ENCODE measurements at regions of chr5 and their contacts with region 1.

Region 1: DNA sequence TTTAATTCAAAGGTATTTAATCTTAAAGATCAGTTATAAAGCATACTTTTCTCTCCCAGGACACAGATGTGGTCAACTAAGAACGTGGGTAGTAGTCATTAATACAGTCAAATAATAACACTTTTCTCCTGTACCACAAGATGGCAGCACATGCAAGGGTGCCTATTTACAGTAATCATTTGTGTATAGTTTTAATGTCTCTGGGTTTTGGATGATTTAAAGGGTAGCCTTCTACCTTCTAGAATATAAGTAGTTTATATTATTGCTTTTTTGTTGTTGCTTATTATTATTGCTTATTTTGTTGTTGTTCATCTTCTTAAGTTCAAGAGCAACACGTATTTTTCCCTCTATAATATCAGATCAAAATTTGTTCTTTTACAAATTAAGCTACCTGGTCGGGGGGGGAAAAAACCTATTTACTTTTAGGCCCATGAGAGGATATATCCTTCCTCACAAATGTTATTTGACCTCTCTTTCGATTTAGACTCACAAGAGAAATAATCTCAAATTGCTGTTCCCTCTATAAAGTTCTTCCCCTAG is 59.6 kb upstream of the SLC27A6 start:
- DNase-seq: no peak
- ATAC-seq: peak; percentile 49
- H3K4me3 Mint-ChIP-seq: no peak overlapping the region
- H3K27ac Mint-ChIP-seq: no peak overlapping the region
- H3K4me1 Mint-ChIP-seq: no peaks in the 10 kb centered on the region
- H3K27me3 Mint-ChIP-seq: no peaks in the 10 kb centered on the region
- CTCF ChIP-seq: peak; percentile 77

Region 2: GRCh38 chr5:127564002-127564769 is 1341.5 kb before region 1 on chr5:
- CTCF ChIA-PET with region 1: no interaction called
- POLR2A ChIA-PET with region 1: no interaction called
- intact Hi-C with region 1: loop called (anchors 1 kb)
- DNase-seq: no peak
- ATAC-seq: peak; percentile 64
- H3K4me3 Mint-ChIP-seq: no peak overlapping the region
- H3K27ac Mint-ChIP-seq: no peak overlapping the region
- H3K4me1 Mint-ChIP-seq: peaks cover 3% of the 10 kb centered on the region
- H3K27me3 Mint-ChIP-seq: peaks cover 11% of the 10 kb centered on the region
- CTCF ChIP-seq: peak; percentile 38

Region 3: DNA sequence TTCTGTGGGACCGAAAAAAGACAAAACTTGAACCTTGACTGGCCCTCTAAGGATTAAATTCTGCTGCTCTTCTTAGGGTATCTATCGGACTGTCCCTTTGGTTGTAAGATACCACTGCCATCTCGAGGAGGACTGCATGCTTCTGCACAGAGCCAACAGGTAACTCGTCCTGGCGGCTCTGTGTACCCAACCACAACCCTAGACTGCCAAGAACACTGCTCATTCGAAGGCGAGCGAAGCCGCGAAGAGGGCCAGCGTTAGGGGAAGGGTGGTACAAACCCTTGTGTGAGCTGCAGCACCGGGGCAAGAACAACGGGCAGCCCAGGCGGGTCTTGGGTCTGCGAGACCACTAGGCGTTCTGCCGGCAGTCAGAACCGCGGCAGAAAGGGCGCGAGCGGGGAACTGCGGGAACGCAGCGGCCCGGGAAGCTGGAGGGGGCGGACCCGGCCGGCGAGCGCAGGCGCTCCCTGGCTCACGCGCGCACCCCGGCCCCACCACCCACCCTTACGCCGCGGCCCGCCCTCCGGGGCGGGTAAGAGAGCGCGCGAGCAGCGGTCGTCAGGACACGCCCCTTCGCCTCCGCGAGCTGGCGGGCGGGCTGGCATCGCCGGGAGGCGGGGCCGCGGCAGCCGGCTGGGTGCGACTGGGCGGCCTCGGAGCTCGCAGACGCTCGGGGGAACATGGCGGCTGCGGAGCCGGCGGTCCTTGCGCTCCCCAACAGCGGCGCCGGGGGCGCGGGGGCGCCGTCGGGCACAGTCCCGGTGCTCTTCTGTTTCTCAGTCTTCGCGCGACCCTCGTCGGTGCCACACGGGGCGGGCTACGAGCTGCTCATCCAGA is 188.7 kb after region 1 on chr5 and contains the start of gene ISOC1:
- CTCF ChIA-PET with region 1: interaction called, 5 read pairs
- POLR2A ChIA-PET with region 1: no interaction called
- intact Hi-C with region 1: loop called (anchors 1 kb)
- DNase-seq: peak; percentile 89
- ATAC-seq: peak; percentile 94
- H3K4me3 Mint-ChIP-seq: peak within 1 kb of the TSS; percentile 90
- H3K27ac Mint-ChIP-seq: peak within 1 kb of the TSS; percentile 79
- H3K4me1 Mint-ChIP-seq: peaks cover 15% of the 10 kb centered on the region
- H3K27me3 Mint-ChIP-seq: peaks cover 13% of the 10 kb centered on the region
- CTCF ChIP-seq: no peak
- total RNA-seq, gene ISOC1: 9.9 and 10.7 TPM in 2 replicates

Region 4: DNA sequence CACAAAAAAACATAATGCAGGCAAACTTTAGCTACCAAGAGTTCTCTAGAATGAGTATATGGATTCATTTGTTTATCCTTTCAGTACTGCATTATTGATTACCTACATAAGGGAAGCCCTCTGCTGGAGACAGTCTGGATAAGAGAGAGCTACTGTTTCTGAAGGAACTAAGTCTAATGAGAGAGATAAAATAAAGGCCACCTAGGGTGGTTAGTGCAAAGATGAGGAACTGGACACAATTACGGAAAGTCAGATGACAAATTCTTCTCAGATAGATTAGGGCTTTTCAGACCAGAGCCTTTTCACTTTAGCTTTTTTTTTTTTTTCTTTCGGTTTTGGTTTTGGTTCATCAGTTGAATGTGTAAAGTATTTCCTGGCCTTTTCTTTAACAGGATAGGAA is 220.2 kb after region 1 on chr5:
- CTCF ChIA-PET with region 1: no interaction called
- POLR2A ChIA-PET with region 1: no interaction called
- intact Hi-C with region 1: loop called (anchors 1 kb)
- DNase-seq: no peak
- ATAC-seq: peak; percentile 45
- H3K4me3 Mint-ChIP-seq: no peak overlapping the region
- H3K27ac Mint-ChIP-seq: peak overlapping the region; percentile 66
- H3K4me1 Mint-ChIP-seq: peaks cover 20% of the 10 kb centered on the region
- H3K27me3 Mint-ChIP-seq: no peaks in the 10 kb centered on the region
- CTCF ChIP-seq: no peak

Region 5: GRCh38 chr5:129135633-129136032 is 230.0 kb after region 1 on chr5:
- CTCF ChIA-PET with region 1: no interaction called
- POLR2A ChIA-PET with region 1: no interaction called
- intact Hi-C with region 1: loop called (anchors 1 kb)
- DNase-seq: no peak
- ATAC-seq: no peak
- H3K4me3 Mint-ChIP-seq: no peak overlapping the region
- H3K27ac Mint-ChIP-seq: no peak overlapping the region
- H3K4me1 Mint-ChIP-seq: no peaks in the 10 kb centered on the region
- H3K27me3 Mint-ChIP-seq: peaks cover 2% of the 10 kb centered on the region
- CTCF ChIP-seq: no peak

Region 6: DNA sequence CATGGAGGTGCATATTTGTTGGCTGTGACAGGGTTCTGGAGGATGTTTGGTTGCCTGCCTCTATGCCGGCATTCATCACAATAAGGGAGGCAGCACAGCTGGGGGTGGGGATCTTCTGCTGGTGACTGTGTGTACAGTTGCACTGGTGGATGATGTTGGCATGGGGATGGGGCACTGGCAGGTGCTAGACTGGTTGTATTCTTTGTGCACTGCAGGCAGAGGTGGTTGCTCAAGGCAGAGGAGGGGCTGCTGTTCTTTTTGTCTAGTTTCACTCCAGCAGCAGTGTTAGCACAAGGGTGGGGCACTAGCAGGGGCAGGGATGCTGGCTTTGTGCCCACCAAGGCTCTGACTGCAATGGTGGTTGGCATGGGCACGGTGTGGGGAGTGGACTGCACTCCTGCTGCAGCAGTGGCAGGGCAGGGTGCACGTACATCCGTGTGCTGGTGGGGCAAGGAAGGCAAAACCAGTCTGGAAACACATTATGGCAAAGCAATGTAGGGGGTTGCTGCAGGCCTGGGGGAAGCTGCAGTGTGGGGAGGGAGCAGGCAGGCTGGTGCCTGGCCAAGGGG is 258.3 kb after region 1 on chr5:
- CTCF ChIA-PET with region 1: no interaction called
- POLR2A ChIA-PET with region 1: no interaction called
- intact Hi-C with region 1: no loop called
- DNase-seq: no peak
- ATAC-seq: no peak
- H3K4me3 Mint-ChIP-seq: no peak overlapping the region
- H3K27ac Mint-ChIP-seq: no peak overlapping the region
- H3K4me1 Mint-ChIP-seq: no peaks in the 10 kb centered on the region
- H3K27me3 Mint-ChIP-seq: no peaks in the 10 kb centered on the region
- CTCF ChIP-seq: no peak

Region 7: DNA sequence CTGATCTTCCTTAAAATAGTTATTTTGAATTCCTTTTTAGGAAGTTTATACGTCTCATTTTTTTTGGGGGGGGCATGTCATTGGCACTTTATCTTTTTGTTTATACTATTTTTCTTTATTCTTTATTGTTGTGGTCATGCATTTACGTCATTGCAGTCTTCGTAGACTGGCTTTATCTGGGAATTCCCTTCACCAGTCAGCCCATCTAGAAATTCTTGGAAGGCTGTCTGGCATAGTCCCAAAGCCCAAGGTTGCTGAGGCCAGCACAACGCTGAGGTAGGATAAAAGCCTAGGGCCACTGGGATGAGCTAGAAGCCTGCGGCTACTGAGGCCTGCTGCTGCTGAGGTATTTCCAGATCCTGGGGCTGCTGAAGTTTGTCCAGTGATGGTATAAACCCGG is 310.4 kb after region 1 on chr5:
- CTCF ChIA-PET with region 1: no interaction called
- POLR2A ChIA-PET with region 1: no interaction called
- intact Hi-C with region 1: no loop called
- DNase-seq: no peak
- ATAC-seq: no peak
- H3K4me3 Mint-ChIP-seq: no peak overlapping the region
- H3K27ac Mint-ChIP-seq: no peak overlapping the region
- H3K4me1 Mint-ChIP-seq: no peaks in the 10 kb centered on the region
- H3K27me3 Mint-ChIP-seq: no peaks in the 10 kb centered on the region
- CTCF ChIP-seq: no peak

Region 8: DNA sequence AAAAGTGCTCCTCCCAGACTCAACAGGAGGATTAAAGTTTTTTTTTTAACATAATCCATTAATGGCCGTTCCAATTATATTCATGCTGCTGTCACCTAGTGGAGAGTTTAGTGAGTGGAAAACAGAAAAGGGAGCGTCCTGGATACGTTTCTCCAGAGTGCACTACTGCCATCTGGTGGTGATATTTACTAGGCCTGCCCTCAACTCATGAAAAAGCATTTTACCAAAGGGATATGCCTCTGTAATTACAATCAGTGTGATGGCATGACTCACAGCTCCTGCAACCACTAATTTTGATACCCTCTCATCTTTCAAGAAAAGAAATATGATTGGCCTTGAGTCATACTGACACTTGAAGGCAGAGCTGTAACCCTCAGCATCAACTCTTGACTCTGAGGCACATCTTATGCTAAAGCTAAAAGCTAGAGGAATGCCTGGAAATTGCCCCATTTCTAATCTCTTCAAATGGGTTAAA is 862.3 kb after region 1 on chr5:
- CTCF ChIA-PET with region 1: interaction called, 17 read pairs
- POLR2A ChIA-PET with region 1: no interaction called
- intact Hi-C with region 1: loop called (anchors 1 kb)
- DNase-seq: no peak
- ATAC-seq: peak; percentile 64
- H3K4me3 Mint-ChIP-seq: no peak overlapping the region
- H3K27ac Mint-ChIP-seq: no peak overlapping the region
- H3K4me1 Mint-ChIP-seq: peaks cover 2% of the 10 kb centered on the region
- H3K27me3 Mint-ChIP-seq: peaks cover 2% of the 10 kb centered on the region
- CTCF ChIP-seq: peak; percentile 37

Region 9: GRCh38 chr5:129852747-129853352 is 947.2 kb after region 1 on chr5:
- CTCF ChIA-PET with region 1: no interaction called
- POLR2A ChIA-PET with region 1: no interaction called
- intact Hi-C with region 1: loop called (anchors 1 kb)
- DNase-seq: peak; percentile 28
- ATAC-seq: peak; percentile 61
- H3K4me3 Mint-ChIP-seq: no peak overlapping the region
- H3K27ac Mint-ChIP-seq: no peak overlapping the region
- H3K4me1 Mint-ChIP-seq: no peaks in the 10 kb centered on the region
- H3K27me3 Mint-ChIP-seq: peaks cover 4% of the 10 kb centered on the region
- CTCF ChIP-seq: peak; percentile 51